WTC11 (cell line): ENCODE measurements at regions of chr17 and their contacts with region 1.

Region 1: GRCh38 chr17:979538-980405 is at the start of gene NXN:
- DNase-seq: peak; percentile 83
- ATAC-seq: peak; percentile 74
- H3K4me3 Mint-ChIP-seq: peak within 1 kb of the TSS; percentile 93
- H3K27ac Mint-ChIP-seq: peak within 1 kb of the TSS; percentile 96; the same call in 1 of the 2 replicates
- H3K4me1 Mint-ChIP-seq: peaks cover 37% of the 10 kb centered on the region
- H3K27me3 Mint-ChIP-seq: no peaks in the 10 kb centered on the region
- CTCF ChIP-seq: no peak
- total RNA-seq, gene NXN: 96.8 to 100 TPM (median 98.7 TPM) in 3 replicates

Region 2: DNA sequence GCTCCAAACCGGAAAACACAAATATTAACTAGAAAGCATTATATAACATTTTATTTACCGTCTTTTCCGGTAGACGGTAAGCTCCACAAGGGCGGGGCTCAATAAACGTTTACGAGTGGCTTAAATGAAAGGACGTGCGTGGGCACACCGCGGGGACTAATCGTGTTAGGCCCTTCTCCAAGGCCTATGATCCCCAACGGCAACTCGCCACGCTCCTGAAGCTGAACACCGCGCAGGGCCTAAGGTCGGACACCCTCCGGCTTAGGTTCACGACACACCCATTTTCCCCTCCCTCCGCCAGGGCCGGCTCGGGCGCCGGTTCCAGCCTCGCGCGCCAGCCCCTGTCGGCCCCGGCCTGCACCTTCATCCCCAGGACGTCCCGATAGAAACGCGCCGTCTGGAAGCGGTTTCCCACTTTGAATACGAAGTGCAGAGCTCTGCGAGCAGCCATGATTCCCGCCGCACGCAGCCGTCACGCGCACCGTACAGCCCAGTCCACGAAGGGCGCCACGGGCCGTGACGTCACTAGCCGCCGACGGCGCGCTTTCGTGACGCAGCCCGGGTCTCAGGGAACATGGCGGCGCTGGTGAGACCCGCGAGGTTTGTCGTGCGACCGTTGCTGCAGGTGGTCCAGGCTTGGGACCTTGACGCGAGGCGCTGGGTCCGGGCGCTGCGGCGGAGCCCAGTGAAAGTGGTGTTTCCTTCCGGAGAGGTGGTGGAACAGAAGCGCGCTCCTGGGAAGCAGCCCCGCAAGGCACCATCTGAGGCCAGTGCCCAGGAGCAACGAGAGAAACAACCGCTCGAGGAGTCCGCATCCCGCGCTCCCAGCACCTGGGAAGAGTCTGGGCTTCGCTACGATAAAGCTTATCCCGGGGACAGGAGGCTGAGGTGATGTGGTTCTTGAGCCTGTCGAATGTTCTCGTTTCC is 197.7 kb before region 1 on chr17 and contains the starts of genes GLOD4 and MRM3:
- CTCF ChIA-PET with region 1: interaction called, 34 read pairs
- POLR2A ChIA-PET with region 1: interaction called, 9 read pairs
- DNase-seq: peak; percentile 92
- ATAC-seq: peak; percentile 88
- H3K4me3 Mint-ChIP-seq: peak within 1 kb of the TSS; percentile 96
- H3K27ac Mint-ChIP-seq: peak within 1 kb of the TSS; percentile 98
- H3K4me1 Mint-ChIP-seq: peaks cover 18% of the 10 kb centered on the region
- H3K27me3 Mint-ChIP-seq: no peaks in the 10 kb centered on the region
- CTCF ChIP-seq: no peak
- total RNA-seq, gene GLOD4: 69.0 to 73.3 TPM (median 69.1 TPM) in 3 replicates
- total RNA-seq, gene MRM3: 23.1 to 25.0 TPM (median 24.3 TPM) in 3 replicates

Region 3: GRCh38 chr17:804541-805435 is 175.0 kb before region 1 on chr17:
- CTCF ChIA-PET with region 1: interaction called, 190 read pairs
- POLR2A ChIA-PET with region 1: no interaction called
- DNase-seq: no peak
- ATAC-seq: peak; percentile 65
- H3K4me3 Mint-ChIP-seq: no peak overlapping the region
- H3K27ac Mint-ChIP-seq: no peak overlapping the region
- H3K4me1 Mint-ChIP-seq: peaks cover 8% of the 10 kb centered on the region
- H3K27me3 Mint-ChIP-seq: no peaks in the 10 kb centered on the region
- CTCF ChIP-seq: no peak

Region 4: DNA sequence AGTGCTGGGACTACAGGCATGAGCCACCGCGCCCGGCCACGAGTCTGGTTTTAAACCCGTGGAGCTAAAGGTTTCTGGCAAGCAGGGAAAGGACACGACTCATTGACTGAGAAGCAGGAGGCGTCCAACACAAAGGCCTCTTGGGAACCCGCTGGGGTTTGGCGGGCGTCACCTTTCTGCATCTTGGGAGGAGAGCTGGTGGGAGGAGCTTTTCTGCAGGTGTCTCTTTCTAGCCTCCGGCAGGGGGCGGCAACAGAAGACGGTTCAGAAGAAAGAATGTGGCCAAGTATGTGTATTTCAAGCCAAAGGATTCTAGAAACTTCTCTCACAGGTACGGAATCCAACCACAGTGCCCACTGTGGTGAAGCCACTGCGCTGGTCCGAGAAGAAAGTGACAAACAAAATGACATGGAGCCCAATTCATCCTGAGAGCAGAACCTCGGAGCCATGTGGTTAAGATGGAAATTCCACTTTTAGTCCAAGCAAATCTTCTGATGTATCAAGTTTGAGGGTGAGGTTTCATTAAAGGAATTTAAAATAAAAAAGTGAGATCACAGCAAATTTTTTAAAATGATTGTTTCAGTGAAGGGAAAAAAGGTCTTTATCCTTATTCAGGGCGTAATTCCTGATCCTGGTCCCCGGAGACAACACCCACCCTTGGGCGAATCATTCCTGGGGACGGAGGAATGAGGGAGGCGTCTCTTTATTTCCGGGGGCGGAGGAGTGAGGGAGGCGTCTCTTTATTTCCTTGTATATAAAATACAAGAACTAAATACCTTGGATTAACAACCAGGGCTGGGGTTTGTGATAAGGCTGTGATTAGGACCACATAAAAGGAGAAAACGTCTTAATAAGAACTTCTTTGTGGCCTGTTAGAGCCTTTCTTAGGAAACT is 100.0 kb before region 1 on chr17:
- CTCF ChIA-PET with region 1: interaction called, 102 read pairs
- POLR2A ChIA-PET with region 1: interaction called, 9 read pairs
- DNase-seq: peak; percentile 94
- ATAC-seq: peak; percentile 90
- H3K4me3 Mint-ChIP-seq: peak overlapping the region; percentile 21; the same call in 1 of the 2 replicates
- H3K27ac Mint-ChIP-seq: peak overlapping the region; percentile 97
- H3K4me1 Mint-ChIP-seq: peaks cover 67% of the 10 kb centered on the region
- H3K27me3 Mint-ChIP-seq: no peaks in the 10 kb centered on the region
- CTCF ChIP-seq: peak; percentile 59

Region 5: GRCh38 chr17:927611-928461 is 51.9 kb before region 1 on chr17:
- CTCF ChIA-PET with region 1: interaction called, 18 read pairs
- POLR2A ChIA-PET with region 1: no interaction called
- DNase-seq: no peak
- ATAC-seq: peak; percentile 62
- H3K4me3 Mint-ChIP-seq: no peak overlapping the region
- H3K27ac Mint-ChIP-seq: peak overlapping the region; percentile 90
- H3K4me1 Mint-ChIP-seq: peaks cover 62% of the 10 kb centered on the region
- H3K27me3 Mint-ChIP-seq: no peaks in the 10 kb centered on the region
- CTCF ChIP-seq: no peak

Region 6: GRCh38 chr17:962670-963069 is 17.1 kb before region 1 on chr17:
- CTCF ChIA-PET with region 1: interaction called, 15 read pairs
- POLR2A ChIA-PET with region 1: interaction called, 3 read pairs
- DNase-seq: peak; percentile 69
- ATAC-seq: peak; percentile 83
- H3K4me3 Mint-ChIP-seq: peak overlapping the region; percentile 47
- H3K27ac Mint-ChIP-seq: peak overlapping the region; percentile 98
- H3K4me1 Mint-ChIP-seq: peaks cover 66% of the 10 kb centered on the region
- H3K27me3 Mint-ChIP-seq: no peaks in the 10 kb centered on the region
- CTCF ChIP-seq: no peak